Activated T-helper 2 cell treated with anti-CD3 and anti-CD28 coated beads, Interferon-gamma antibody, Interleukin-2, Interleukin-4, amounts not matched to agents 10 μg/mL and 5 μg/mL and 100 μg/mL, durations not matched to agents 14 hours and 24 hours and 36 hours (primary cell): ENCODE measurements at regions of chr2 and their contacts with region 1.

Region 1: DNA sequence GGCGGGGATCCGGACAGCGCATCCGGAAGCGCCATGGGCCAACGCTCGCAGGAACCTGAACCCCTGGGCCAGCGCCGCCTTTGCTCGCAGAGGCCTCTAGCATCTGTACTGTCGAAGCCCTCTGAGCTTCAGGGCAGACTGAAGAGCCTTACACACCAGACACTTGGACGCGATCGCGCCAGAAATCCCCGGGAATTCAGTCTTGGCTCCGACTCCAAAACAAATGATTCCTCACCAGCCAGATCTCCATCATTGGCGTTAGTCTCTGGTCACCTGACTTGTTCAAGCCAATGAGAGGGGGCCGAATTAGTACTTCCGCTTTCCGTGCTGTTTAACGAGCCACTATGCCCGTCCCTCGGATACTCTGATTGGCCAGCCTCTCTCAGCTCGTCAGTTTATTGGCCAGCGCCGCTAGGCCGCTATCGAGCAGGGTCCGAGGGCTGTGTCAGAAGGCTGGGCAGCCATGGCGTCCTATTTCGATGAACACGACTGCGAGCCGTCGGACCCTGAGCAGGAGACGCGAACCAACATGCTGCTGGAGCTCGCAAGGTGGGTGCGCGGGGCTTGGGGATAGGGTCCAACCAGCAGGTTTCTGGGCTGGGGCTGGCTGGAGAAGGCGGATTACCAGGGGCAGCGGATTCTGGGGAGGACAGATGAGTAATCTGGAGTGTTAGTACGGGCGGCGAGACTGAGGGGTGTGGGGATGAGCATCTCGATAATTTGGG is at the start of gene RNF181:
- DNase-seq: peak; percentile 91
- H3K4me3 Mint-ChIP-seq: peak within 1 kb of the TSS; percentile 96
- H3K27ac Mint-ChIP-seq: peak within 1 kb of the TSS; percentile 96
- H3K4me1 Mint-ChIP-seq: peaks cover 18% of the 10 kb centered on the region
- H3K27me3 Mint-ChIP-seq: no peaks in the 10 kb centered on the region
- total RNA-seq, gene RNF181: 130 and 134 TPM in 2 replicates

Region 2: DNA sequence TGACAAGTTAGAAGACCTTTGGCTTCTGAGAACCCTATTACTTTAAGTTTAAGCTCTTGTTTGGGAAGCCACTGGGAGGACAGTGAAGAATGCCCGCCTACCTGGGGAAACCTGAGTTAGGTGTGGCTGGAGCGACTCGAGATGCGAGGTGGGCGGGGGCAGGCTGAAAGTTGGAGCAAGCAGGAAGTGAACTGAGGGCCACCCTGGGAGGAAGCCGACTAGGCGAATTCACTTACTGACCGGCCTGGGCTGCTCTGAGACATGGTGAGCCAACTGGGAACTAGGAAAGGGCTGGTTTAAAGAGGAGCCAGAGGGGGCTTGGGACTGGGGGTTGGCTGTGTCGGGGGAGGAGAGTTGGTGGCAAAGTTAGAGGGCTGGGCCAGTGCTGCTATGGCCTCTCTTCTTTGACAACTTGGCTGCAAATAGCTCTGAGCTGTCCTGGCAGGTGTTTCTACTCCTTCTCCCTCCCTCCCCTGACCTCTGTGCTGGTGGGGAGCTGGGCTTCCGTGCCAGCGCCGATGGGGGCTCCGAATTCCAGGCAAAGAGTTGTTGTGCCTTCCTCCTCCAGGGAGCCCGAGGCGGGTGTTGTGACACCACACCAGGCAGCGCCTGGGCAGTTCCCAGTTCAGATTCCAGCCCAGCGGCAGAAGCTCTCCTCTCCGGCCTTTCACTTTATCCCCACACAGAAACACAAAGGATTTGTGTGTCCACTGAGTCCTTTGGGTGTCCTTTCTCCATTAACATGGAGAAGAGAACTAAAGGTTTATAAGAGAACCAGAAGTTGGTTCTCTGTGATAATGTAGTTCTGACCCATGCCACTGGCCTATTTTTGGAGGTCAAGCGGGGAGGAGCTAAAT is 17.8 kb before region 1 on chr2 and contains the start of gene VAMP8:
- intact Hi-C with region 1: loop called (anchors 1 kb)
- DNase-seq: peak; percentile 45
- H3K4me3 Mint-ChIP-seq: peak within 1 kb of the TSS; percentile 89
- H3K27ac Mint-ChIP-seq: peak within 1 kb of the TSS; percentile 80
- H3K4me1 Mint-ChIP-seq: peaks cover 18% of the 10 kb centered on the region
- H3K27me3 Mint-ChIP-seq: peaks cover 2% of the 10 kb centered on the region
- total RNA-seq, gene VAMP8: 99.7 and 101 TPM in 2 replicates

Region 3: DNA sequence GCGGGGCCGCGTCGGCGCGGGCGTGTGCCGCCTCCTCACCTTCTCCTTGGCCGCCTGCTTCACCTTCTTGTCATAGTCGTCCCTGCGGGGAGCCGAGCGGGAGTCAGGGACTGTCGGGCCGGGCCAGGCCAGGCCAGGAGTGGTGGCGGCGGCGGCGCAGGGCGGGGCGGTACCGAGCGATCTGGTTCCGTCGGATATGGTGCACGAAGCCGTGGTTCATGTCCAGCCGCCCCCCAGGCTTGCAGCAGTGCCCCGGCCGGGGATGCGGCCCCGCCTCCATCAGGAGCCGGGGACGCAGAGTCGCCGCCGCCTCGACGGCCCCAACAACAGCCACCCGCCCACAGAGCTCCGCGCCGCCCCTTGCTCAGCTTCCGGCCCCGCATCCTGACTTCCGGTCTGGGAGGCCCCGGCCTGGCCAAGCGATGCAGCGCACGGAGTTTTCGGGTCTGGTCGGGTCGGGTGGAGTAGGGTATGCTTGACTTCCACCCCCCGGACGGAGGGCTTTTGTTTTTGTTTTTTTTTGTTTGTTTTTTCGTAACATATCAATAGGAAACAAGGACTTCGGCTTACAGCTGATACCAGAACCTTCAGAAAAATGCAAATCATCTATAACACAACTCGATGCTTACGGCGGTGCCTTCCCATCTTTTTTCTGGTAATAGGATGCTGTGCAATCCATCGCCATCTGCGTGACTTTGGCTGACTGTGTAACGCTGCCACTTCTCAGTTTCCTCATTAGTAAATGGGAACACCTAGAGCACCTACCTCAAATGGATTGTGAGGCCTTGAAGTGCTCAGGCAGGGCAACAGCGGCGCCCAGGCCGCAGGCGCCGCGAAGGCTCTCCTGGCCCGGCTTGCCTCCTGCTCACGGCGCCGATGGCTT is 16.5 kb after region 1 on chr2 and contains the start of gene C2orf68:
- intact Hi-C with region 1: loop called (anchors 2 kb)
- DNase-seq: peak; percentile 85
- H3K4me3 Mint-ChIP-seq: peak within 1 kb of the TSS; percentile 100
- H3K27ac Mint-ChIP-seq: peak within 1 kb of the TSS; percentile 97
- H3K4me1 Mint-ChIP-seq: peaks cover 5% of the 10 kb centered on the region
- H3K27me3 Mint-ChIP-seq: no peaks in the 10 kb centered on the region
- total RNA-seq, gene C2orf68: 34.7 and 35.6 TPM in 2 replicates

Region 4: DNA sequence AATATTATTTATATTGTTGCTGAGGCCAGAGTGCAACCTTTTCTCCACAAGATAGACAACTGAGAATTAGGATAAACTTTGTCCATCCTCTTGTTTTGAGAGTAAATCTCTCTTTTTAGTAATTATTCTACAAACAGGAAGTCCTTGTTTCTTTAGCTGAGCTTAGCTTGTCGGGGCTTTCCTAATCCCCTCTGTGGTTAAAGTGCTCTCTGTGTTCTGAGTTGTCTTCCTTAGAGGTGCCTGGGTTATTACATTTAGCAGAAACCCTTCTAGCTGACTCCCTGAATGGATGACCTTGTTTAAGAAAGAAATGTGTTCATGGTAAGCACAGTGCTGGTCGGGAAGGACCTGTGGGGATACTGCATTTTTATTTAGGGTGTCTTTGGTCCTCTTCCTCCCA is 33.2 kb after region 1 on chr2:
- intact Hi-C with region 1: no loop called
- DNase-seq: no peak
- H3K4me3 Mint-ChIP-seq: no peak overlapping the region
- H3K27ac Mint-ChIP-seq: no peak overlapping the region
- H3K4me1 Mint-ChIP-seq: peaks cover 4% of the 10 kb centered on the region
- H3K27me3 Mint-ChIP-seq: no peaks in the 10 kb centered on the region

Region 5: GRCh38 chr2:85694052-85695025 is 98.9 kb after region 1 on chr2 and contains the start of gene GNLY:
- intact Hi-C with region 1: no loop called
- DNase-seq: no peak
- H3K4me3 Mint-ChIP-seq: no peak within 1 kb of the TSS
- H3K27ac Mint-ChIP-seq: peak within 1 kb of the TSS; percentile 33
- H3K4me1 Mint-ChIP-seq: peaks cover 20% of the 10 kb centered on the region
- H3K27me3 Mint-ChIP-seq: peaks cover 6% of the 10 kb centered on the region
- total RNA-seq, gene GNLY: 21.9 and 23.5 TPM in 2 replicates